Heart right ventricle (tissue), 16 donors: ENCODE measurements at regions of chr20 and their contacts with region 1.

Region 1: GRCh38 chr20:23361598-23362384 is at the start of gene GZF1:
- DNase-seq: peak; percentile 97 to 99
- ATAC-seq: peak; percentile 85 to 95 (median 90)
- H3K4me3 ChIP-seq: peak within 1 kb of the TSS; percentile 64 to 93 (median 87)
- H3K27ac ChIP-seq: peak within 1 kb of the TSS; percentile 97 to 100 (median 100)
- H3K4me1 ChIP-seq: peaks cover 10 to 81% (median 59%) of the 10 kb centered on the region in 9 donors
- H3K27me3 ChIP-seq: no peaks in the 10 kb centered on the region
- CTCF ChIP-seq: peak in 5 of 9 donors; percentile 2 to 35 (median 13)
- total RNA-seq, gene GZF1: 20.6 to 42.7 (median 28.8) TPM

Region 2: GRCh38 chr20:23407781-23408464 is 46.1 kb after region 1 on chr20:
- intact Hi-C with region 1: loop called in 3 of 10 experiments (anchors 5 to 10 kb)
- DNase-seq: no peak
- ATAC-seq: no peak
- H3K4me3 ChIP-seq: no peak overlapping the region
- H3K27ac ChIP-seq: no peak overlapping the region
- H3K4me1 ChIP-seq: peaks cover 0 to 69% (median 56%) of the 10 kb centered on the region in 9 donors
- H3K27me3 ChIP-seq: no peaks in the 10 kb centered on the region
- CTCF ChIP-seq: no peak

Region 3: DNA sequence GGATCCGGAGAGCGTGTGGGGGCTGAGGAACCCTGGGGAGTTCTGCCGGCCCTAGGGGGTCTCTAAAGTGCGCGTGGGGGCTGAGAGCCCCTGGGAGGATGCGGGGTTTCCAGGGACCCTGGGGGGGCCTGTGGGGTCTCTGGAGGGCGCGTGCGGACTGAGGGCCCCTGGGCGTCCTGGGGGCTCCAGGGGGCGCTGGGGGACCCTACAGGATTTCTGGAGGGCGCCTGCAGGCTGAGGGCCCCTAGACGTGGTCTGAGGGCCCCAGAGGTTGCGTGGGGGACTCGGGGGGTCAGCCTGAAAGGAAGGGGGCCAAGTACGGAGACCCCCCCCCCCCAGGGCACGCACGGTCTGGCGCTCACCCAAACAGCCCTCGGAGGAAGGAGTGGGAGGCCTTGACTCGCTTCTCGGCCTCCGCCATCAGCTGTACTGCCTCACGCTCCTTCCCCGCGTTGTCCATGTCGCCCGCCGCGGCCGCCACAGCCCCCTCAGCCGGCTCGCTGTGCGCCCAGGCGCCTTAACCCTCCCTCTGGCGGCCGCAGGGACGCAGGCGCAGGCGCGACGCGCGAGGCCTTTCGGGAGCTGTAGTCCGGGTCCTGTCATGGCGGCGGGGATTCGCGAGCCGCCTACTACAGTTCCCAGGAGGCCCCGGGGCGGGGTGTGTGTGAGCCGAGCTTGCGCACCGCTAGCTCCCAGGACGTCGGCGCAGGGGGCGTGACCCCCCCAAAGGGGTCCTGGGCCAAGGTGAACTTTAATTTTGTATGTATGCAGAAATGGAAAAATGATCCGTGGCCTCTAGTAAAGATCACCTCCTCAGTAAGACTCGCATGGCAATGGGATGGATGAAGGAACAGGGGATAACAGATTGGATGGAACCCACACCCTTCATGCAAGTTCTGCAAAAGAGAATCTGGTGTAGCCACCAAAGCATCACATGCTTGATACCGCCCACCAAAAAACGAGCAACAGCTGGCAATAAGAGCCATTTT is 59.4 kb after region 1 on chr20 and contains the start of gene NAPB:
- intact Hi-C with region 1: loop called in 8 of 10 experiments (anchors 5 to 10 kb)
- DNase-seq: peak; percentile 96 to 97
- ATAC-seq: peak; percentile 98 to 99 (median 99)
- H3K4me3 ChIP-seq: peak within 1 kb of the TSS; percentile 82 to 98 (median 94)
- H3K27ac ChIP-seq: peak within 1 kb of the TSS; percentile 78 to 95 (median 94)
- H3K4me1 ChIP-seq: peaks cover 0 to 40% (median 30%) of the 10 kb centered on the region in 9 donors
- H3K27me3 ChIP-seq: peaks cover 0 to 5% (median 0%) of the 10 kb centered on the region in 7 donors
- CTCF ChIP-seq: peak; percentile 45 to 73 (median 62)
- total RNA-seq, gene NAPB: 3.1 to 7.2 (median 6.1) TPM

Region 4: DNA sequence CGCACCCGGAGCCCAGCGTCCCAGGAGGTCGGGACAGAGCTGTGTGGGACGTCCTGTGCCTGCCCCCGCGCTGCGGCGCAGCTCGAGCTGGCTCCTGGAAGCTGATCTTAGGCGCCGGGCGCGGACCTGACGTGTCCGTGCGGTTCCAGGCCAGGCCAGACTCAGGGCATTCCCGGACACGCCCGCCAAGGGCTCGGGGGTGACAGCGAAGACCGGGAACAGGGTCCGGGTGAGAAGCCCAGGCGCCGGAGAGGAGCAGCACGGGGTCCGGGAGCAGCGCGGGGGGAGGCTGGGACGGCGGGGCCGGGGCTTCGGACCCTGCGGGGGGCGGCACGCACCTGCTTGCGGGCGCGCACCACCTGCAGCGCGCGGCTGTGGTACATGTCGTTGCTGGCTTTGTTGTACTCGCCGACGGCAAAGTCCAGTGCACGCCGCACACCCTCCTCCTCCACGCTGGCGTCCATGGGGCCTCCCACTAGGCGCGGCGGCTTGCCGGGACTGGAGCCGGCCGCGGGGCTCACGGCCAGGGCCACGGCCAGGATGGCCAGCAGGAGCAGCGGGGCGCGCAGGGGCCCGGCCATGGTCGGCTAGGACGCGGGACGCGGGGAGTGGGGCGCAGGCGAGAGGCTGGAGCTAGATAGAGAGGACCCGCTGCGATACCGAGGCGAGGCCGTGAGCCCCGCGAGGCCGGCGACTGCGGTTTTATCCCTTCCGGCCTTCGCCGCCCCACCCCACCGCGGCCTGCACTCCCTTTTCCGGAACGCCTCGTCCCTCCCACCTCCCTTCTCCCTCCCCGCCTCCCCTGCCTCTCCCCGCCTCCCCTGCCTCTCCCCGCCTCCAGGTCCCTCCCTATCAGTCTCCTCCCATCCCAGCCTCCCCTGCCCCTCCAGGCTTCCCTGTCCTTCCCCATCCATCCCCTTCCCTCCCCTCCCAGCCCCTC is 275.8 kb after region 1 on chr20 and contains the start of gene CST3:
- intact Hi-C with region 1: loop called in 4 of 10 experiments (anchors 10 kb)
- DNase-seq: peak; percentile 94
- ATAC-seq: peak; percentile 77 to 94 (median 90)
- H3K4me3 ChIP-seq: peak within 1 kb of the TSS; percentile 73 to 100 (median 93)
- H3K27ac ChIP-seq: peak within 1 kb of the TSS; percentile 92 to 100 (median 98)
- H3K4me1 ChIP-seq: peaks cover 5 to 61% (median 40%) of the 10 kb centered on the region in 9 donors
- H3K27me3 ChIP-seq: no peaks in the 10 kb centered on the region
- CTCF ChIP-seq: peak in 2 of 9 donors; percentile 6 to 8
- total RNA-seq, gene CST3: 395 to 1,066 (median 576) TPM